Right cardiac atrium (tissue), 5 donors: ENCODE measurements at regions of chr5 and their contacts with region 1.

Region 1: GRCh38 chr5:77491783-77492652 is at the start of gene WDR41:
- DNase-seq: peak; percentile 95 to 97 (median 97)
- ATAC-seq: peak; percentile 98
- H3K4me3 ChIP-seq: peak within 1 kb of the TSS; percentile 72
- H3K27ac ChIP-seq: peak within 1 kb of the TSS; percentile 95
- H3K4me1 ChIP-seq: no peaks in the 10 kb centered on the region
- H3K27me3 ChIP-seq: no peaks in the 10 kb centered on the region
- total RNA-seq, gene WDR41: 29.1 to 33.9 (median 30.0) TPM

Region 2: GRCh38 chr5:76867827-76868693 is 624.0 kb before region 1 on chr5:
- intact Hi-C with region 1: loop called in 1 of 4 experiments (anchors 10 kb)
- DNase-seq: peak; percentile 54 to 76 (median 74)
- ATAC-seq: peak; percentile 88 to 90
- H3K4me3 ChIP-seq: no peak overlapping the region
- H3K27ac ChIP-seq: no peak overlapping the region
- H3K4me1 ChIP-seq: no peaks in the 10 kb centered on the region
- H3K27me3 ChIP-seq: no peaks in the 10 kb centered on the region

Region 3: DNA sequence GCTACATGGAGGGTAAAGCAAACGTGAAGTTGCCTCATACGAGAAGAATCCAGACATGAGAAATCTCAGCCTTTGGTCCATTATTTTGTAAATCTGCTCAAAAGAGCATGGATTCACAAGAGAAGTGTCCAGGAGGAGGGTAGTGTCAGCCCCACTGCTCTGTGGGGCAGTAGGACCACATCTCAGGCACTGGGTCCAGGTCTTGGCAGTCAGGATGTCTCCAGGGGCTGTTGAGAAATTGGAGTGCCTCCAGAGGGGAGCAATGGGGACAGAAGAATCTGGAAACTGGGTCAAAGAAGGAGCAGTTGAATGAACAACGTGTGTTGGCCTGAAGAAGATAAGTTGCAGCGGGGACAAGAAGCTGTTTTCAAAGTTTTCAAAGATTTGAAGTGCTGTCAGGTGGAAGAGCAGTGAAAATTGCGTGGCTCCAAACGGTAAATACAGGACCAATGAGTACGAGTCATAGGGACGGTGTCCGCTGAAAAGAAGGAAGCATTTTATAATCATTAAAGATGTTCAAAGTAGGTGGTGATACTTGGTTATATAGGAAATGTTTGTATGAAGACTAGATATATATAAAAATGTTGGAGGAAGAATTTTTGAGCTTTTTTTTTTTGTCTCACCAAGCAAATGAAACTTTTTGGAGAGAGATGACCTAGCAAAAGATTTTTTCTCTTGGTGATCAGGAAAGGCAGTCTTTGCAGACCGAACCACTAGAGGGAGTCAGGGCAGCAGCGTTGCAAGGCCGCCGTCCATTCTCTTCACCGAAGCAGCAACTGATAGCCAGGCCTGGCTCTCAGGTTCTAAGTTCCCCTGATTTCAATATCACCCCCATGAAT is 347.8 kb before region 1 on chr5:
- intact Hi-C with region 1: loop called in 2 of 4 experiments (anchors 10 kb)
- DNase-seq: peak; percentile 62 to 83 (median 81)
- ATAC-seq: peak; percentile 69 to 80
- H3K4me3 ChIP-seq: no peak overlapping the region
- H3K27ac ChIP-seq: no peak overlapping the region
- H3K4me1 ChIP-seq: no peaks in the 10 kb centered on the region
- H3K27me3 ChIP-seq: no peaks in the 10 kb centered on the region

Region 4: GRCh38 chr5:77292026-77292757 is 199.8 kb before region 1 on chr5:
- intact Hi-C with region 1: no loop called
- DNase-seq: no peak
- ATAC-seq: no peak
- H3K4me3 ChIP-seq: no peak overlapping the region
- H3K27ac ChIP-seq: no peak overlapping the region
- H3K4me1 ChIP-seq: no peaks in the 10 kb centered on the region
- H3K27me3 ChIP-seq: no peaks in the 10 kb centered on the region